Psoas muscle (tissue), 8 donors: ENCODE measurements at regions of chr2 and their contacts with region 1.

Region 1: DNA sequence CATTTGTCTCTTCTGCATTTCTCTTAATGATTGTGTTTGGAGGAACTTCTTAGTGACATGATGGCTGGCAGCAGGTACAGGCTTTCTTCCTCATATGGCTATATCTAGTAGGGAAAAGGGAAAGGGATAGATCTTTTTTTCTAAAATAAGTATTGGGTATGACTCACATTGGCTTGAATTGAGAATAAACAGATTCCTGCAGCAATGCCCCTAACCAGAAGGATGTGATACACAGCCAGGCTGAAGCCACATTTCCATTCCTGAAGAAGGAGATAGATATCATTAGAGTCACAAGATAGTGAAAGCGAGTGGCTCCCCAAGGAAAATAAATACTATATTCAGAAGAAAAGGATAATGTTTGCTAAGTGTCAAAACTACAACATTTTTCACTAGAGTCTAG is 61.1 kb downstream of the VWC2L start:
- DNase-seq: no peak
- ATAC-seq: no peak
- H3K4me3 ChIP-seq: no peak overlapping the region
- H3K27ac ChIP-seq: no peak overlapping the region
- H3K4me1 ChIP-seq: no peaks in the 10 kb centered on the region
- H3K27me3 ChIP-seq: no peaks in the 10 kb centered on the region
- CTCF ChIP-seq: no peak

Region 2: GRCh38 chr2:214809751-214810564 is 338.0 kb after region 1 on chr2:
- intact Hi-C with region 1: loop called in 1 of 2 experiments (anchors 10 kb)
- DNase-seq: peak; percentile 100
- ATAC-seq: peak; percentile 93 to 96 (median 95)
- H3K4me3 ChIP-seq: peak overlapping the region; percentile 74
- H3K27ac ChIP-seq: peak overlapping the region; percentile 83
- H3K4me1 ChIP-seq: peaks cover 20% of the 10 kb centered on the region
- H3K27me3 ChIP-seq: no peaks in the 10 kb centered on the region
- CTCF ChIP-seq: no peak